ENCODE measurements at regions of chr4 and their contacts with region 1.

Region 1: DNA sequence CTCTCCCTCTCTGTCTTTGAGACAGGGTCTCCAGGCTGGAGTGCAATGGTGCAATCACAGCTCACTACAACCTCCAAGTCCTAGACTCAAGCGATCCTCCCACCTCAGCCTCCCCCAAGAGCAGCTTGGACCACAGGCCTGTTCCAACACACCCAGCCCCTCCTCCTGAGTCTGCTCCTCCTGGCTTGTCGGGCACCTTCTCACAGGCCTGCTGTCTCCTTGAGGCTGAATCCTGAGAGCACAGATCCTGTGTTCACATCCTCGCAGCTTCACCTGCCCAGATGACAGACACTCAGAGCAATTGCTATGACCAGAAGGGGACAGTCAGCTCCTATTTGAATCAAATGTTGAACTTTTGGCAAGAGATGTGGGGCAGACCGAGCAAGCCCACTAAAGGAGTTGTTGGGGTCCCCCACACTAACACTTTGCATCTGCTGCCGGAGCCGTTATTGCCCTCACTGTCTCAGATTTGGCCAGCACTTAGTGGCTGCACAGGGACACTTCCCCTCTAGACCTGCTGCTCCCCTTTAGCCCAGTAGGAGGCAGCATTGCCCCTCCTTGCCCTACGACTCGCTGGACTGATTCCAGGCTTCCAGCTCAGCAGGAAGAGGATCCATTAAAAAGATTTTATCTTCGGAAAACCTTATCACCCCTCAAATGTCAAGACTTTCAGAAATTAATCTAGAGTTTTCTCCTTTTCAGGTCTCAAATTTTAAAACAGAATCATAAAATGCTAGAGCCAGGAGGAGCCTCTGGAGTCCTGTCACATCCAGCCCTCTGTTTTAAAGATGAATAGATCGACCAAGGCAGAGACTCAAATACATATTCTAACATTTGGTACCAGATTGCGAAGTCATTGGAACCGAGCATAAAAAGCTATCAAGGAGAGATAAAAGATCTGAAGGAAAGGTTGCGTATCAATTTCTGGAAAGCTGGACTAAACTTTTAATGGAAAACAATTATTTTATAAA is 113.7 kb downstream of the USP46 start:
- DNase-seq: peak; percentile 49
- H3K4me3 ChIP-seq: no peak overlapping the region
- H3K27ac ChIP-seq: no peak overlapping the region
- H3K4me1 ChIP-seq: peaks cover 16% of the 10 kb centered on the region
- H3K27me3 ChIP-seq: no peaks in the 10 kb centered on the region
- CTCF ChIP-seq: peak; percentile 98

Region 2: GRCh38 chr4:52234561-52235440 is 310.6 kb before region 1 on chr4:
- CTCF ChIA-PET with region 1: no interaction called
- dilution Hi-C with region 1: no loop called
- in situ Hi-C with region 1: loop called in 1 of 2 experiments (anchors 25 kb)
- intact Hi-C with region 1: loop called (anchors 2 kb)
- DNase-seq: peak; percentile 41
- H3K4me3 ChIP-seq: no peak overlapping the region
- H3K27ac ChIP-seq: no peak overlapping the region
- H3K4me1 ChIP-seq: no peaks in the 10 kb centered on the region
- H3K27me3 ChIP-seq: peaks cover 5% of the 10 kb centered on the region
- CTCF ChIP-seq: peak; percentile 58 to 68

Region 3: GRCh38 chr4:52588097-52588782 is 42.9 kb after region 1 on chr4:
- CTCF ChIA-PET with region 1: no interaction called
- dilution Hi-C with region 1: no loop called
- in situ Hi-C with region 1: no loop called
- intact Hi-C with region 1: loop called (anchors 2 kb)
- DNase-seq: no peak
- H3K4me3 ChIP-seq: no peak overlapping the region
- H3K27ac ChIP-seq: peak overlapping the region; percentile 25
- H3K4me1 ChIP-seq: peaks cover 19% of the 10 kb centered on the region
- H3K27me3 ChIP-seq: no peaks in the 10 kb centered on the region
- CTCF ChIP-seq: peak; percentile 39 to 45

Region 4: DNA sequence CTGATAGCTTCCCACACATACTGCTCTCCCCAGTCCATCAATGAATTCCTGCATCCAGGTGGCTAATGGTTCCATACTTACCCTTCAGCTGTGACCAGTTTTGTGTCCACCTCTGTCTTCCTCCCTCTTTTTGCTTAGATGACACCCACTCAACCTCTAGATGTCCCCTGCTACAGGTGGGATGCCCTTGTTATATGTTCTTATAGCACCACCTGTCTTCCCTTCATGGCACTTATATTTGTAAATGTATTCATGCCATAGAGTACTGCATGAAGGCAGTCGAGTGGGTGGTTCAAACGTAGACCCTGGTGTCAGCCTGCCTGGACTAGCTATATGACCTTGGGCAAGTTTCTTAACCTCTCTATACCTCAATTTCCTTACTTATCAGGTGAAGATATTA is 120.2 kb after region 1 on chr4:
- CTCF ChIA-PET with region 1: no interaction called
- dilution Hi-C with region 1: no loop called
- in situ Hi-C with region 1: loop called in 1 of 2 experiments (anchors 10 kb)
- intact Hi-C with region 1: loop called (anchors 2 kb)
- DNase-seq: no peak
- H3K4me3 ChIP-seq: no peak overlapping the region
- H3K27ac ChIP-seq: no peak overlapping the region
- H3K4me1 ChIP-seq: peaks cover 8% of the 10 kb centered on the region
- H3K27me3 ChIP-seq: no peaks in the 10 kb centered on the region
- CTCF ChIP-seq: peak; percentile 8 to 51

Region 5: DNA sequence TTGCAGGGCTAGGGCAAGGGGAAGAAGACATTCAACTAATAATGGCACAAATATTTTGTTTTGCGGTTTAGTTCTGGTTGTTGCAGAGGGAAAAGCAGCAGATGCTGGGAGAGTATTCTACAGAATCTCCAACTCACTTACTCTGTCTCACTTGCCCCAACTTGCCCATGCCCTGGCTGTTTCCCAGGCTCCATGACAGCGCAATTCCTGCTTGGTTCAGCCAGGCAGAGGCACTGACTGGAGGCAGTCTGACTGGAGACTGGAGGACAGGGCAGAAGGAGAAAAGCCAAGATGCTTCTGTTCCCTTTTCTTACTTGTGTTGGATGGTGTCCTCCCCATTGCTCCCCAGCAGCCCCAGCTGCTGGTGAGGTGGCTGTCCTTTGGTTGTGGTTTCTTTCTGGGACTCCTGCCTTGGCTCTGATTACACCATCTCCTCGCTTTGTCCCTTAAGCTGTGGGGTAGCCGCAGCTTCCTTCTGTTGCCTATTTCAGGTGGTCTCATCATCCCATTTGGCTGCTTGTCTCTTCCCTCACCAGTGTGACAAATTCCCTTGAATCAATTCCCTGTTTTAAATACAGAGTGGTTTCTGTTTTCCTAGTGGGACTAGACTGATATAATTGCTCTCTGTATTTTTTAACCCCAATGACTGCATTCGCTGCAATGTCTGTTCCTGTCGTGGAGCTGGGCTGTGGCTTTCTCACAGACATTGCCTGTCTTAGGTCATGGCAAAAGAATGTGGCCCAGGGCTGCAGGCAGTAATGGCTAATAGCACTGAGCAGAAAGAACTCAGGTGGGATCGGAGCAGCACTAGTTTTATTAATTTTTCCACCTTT is 292.6 kb after region 1 on chr4:
- CTCF ChIA-PET with region 1: no interaction called
- dilution Hi-C with region 1: no loop called
- in situ Hi-C with region 1: loop called in 1 of 2 experiments (anchors 25 kb)
- intact Hi-C with region 1: loop called (anchors 2 kb)
- DNase-seq: peak; percentile 97
- H3K4me3 ChIP-seq: peak overlapping the region; percentile 9 to 32 (median 9)
- H3K27ac ChIP-seq: peak overlapping the region; percentile 99
- H3K4me1 ChIP-seq: peaks cover 57% of the 10 kb centered on the region
- H3K27me3 ChIP-seq: no peaks in the 10 kb centered on the region
- CTCF ChIP-seq: no peak

Region 6: DNA sequence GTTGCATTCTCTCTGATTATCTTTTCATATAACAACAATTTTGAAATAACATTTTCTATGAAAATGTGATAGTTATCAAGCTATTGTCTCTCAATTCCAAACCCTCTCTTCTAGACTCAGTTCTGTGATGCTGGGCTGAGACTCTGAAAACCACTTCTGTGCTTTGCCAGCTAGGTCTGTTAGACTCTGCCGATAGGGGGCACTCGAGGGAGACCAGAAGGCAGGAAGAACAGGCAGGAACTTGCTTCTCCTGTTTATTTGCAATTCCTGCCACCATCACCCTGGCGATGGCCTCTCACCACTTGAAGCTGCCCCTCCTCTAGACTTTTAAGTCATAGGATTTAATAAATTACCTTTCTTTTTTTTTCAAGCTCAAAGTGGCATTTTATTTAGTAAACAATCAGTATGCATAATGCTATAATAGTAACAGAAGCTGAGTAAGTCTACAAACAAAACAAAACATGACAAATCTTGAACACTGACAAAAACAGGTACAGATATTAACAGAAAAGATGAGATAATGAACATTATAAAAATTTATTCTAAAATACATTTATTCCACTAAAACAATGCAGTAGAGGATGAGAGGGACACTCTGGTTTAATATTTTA is 366.4 kb after region 1 on chr4:
- CTCF ChIA-PET with region 1: no interaction called
- dilution Hi-C with region 1: no loop called
- in situ Hi-C with region 1: no loop called
- intact Hi-C with region 1: loop called (anchors 5 kb)
- DNase-seq: peak; percentile 73
- H3K4me3 ChIP-seq: no peak overlapping the region
- H3K27ac ChIP-seq: no peak overlapping the region
- H3K4me1 ChIP-seq: peaks cover 3% of the 10 kb centered on the region
- H3K27me3 ChIP-seq: no peaks in the 10 kb centered on the region
- CTCF ChIP-seq: peak; percentile 94 to 95

Region 7: GRCh38 chr4:53321151-53321983 is 776.0 kb after region 1 on chr4:
- CTCF ChIA-PET with region 1: no interaction called
- dilution Hi-C with region 1: no loop called
- in situ Hi-C with region 1: no loop called
- intact Hi-C with region 1: no loop called
- DNase-seq: peak; percentile 61
- H3K4me3 ChIP-seq: peak overlapping the region in 1 of 3 experiments; percentile 1
- H3K27ac ChIP-seq: peak overlapping the region; percentile 38
- H3K4me1 ChIP-seq: peaks cover 10% of the 10 kb centered on the region
- H3K27me3 ChIP-seq: no peaks in the 10 kb centered on the region
- CTCF ChIP-seq: no peak